PC-9 (cell line): ENCODE measurements at regions of chr1 and their contacts with region 1.

Region 1: GRCh38 chr1:35747938-35748702 is 21.7 kb downstream of the CLSPN start:
- DNase-seq: peak; percentile 61 to 72
- H3K4me3 ChIP-seq: no peak overlapping the region
- H3K27ac ChIP-seq: peak overlapping the region; percentile 48
- H3K4me1 ChIP-seq: no peaks in the 10 kb centered on the region; the same call in 1 of the 2 replicates
- H3K27me3 ChIP-seq: no peaks in the 10 kb centered on the region
- CTCF ChIP-seq: no peak

Region 2: GRCh38 chr1:35568975-35569395 is 179.1 kb before region 1 on chr1:
- CTCF ChIA-PET with region 1: no interaction called
- POLR2A ChIA-PET with region 1: no interaction called
- intact Hi-C with region 1: no loop called
- DNase-seq: peak; percentile 43 to 71
- H3K4me3 ChIP-seq: no peak overlapping the region
- H3K27ac ChIP-seq: no peak overlapping the region
- H3K4me1 ChIP-seq: no peaks in the 10 kb centered on the region
- H3K27me3 ChIP-seq: no peaks in the 10 kb centered on the region
- CTCF ChIP-seq: peak; percentile 92

Region 3: DNA sequence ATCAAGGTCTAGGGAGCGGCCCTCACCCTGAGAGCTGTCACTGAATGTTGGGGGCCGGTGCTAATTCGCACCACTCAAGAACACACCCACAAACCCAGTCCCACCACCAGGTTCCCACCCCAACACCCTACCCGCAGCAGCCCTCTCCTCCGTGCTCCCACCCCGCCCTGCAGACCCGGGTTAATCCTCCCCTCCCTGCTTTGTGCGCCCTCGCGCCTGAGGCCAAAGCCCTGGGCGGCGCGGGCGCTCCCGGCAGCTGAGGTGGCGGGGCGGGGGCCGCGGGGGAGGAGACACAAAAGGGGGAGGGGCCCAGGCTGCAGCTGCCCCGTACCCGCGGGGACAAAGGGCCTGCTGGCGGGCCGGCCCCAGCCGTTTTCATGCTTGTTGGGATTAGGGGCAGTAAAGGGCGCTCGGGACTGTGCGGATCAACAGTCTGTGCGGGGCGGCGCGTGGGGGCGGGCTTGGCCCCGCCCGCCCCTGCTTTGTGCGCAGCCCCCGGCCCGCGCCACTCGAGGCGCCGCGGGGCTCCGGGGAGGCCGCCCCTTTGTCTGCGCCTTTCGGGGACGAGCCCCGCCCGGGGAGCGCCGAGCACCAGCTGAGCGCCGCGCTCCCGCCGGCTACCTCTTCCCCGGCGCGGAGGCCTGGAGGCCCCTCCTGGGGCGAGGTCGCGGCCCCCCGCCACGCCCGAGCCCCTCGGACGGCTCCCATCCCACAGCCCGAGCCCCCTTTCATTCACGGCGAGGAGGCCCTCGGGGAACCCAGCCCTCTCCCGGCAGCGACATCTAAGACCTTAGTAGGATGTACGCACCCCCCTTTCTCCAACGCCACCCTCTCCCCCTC is 40.3 kb before region 1 on chr1:
- CTCF ChIA-PET with region 1: interaction called, 11 read pairs
- POLR2A ChIA-PET with region 1: interaction called, 6 read pairs
- intact Hi-C with region 1: no loop called
- DNase-seq: peak in 1 of 2 experiments; percentile 47
- H3K4me3 ChIP-seq: peak overlapping the region; percentile 42; the same call in 1 of the 2 replicates
- H3K27ac ChIP-seq: no peak overlapping the region
- H3K4me1 ChIP-seq: no peaks in the 10 kb centered on the region
- H3K27me3 ChIP-seq: peaks cover 44% of the 10 kb centered on the region
- CTCF ChIP-seq: no peak

Region 4: GRCh38 chr1:35715568-35716002 is 32.5 kb before region 1 on chr1:
- CTCF ChIA-PET with region 1: interaction called, 10 read pairs
- POLR2A ChIA-PET with region 1: interaction called, 6 read pairs
- intact Hi-C with region 1: no loop called
- DNase-seq: peak; percentile 41 to 61
- H3K4me3 ChIP-seq: no peak overlapping the region
- H3K27ac ChIP-seq: no peak overlapping the region
- H3K4me1 ChIP-seq: no peaks in the 10 kb centered on the region
- H3K27me3 ChIP-seq: no peaks in the 10 kb centered on the region
- CTCF ChIP-seq: peak; percentile 87